CD8-positive, alpha-beta T cell (primary cell): ENCODE measurements at regions of chr2 and their contacts with region 1.

Region 1: DNA sequence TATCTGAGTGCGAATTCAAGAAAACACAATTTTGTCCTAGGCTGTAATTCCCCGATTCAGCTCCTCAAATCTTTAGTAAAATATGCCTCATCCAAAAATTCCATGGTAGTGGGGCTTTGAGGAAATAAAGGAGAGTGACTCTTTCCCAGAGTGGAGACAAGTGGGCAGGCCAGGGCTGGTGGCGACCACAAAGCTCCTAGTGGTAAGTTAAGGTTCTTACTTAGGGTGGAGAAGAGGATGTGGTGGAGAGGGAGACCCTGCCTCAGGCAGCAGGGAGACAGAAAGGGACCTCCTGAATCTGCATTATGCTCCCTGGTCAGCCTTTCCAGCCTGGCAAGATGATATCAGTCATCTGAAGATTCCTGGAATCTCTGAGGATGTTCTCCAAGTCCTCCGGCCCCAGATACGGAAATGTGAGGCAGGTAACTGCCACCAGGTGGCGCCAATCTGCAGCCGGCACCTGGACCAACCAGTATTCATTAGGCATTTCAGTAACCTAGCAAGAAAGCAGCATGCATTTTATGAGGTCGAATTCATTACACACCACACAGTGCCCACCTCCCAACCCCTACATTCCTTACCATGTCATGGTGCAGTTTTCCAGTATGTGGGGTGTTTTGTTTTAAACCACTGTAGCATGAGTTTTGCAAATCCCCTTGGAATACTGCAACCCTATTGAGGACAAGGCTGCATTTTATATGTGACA is 106.4 kb downstream of the POLE4 start:
- DNase-seq: peak; percentile 18 to 63 (median 43)
- ATAC-seq: no peak
- H3K4me3 ChIP-seq: no peak overlapping the region
- H3K4me3 Mint-ChIP-seq: no peak overlapping the region
- H3K27ac ChIP-seq: no peak overlapping the region
- H3K27ac Mint-ChIP-seq: no peak overlapping the region
- H3K4me1 ChIP-seq: no peaks in the 10 kb centered on the region
- H3K4me1 Mint-ChIP-seq: no peaks in the 10 kb centered on the region
- H3K27me3 ChIP-seq: no peaks in the 10 kb centered on the region
- H3K27me3 Mint-ChIP-seq: peaks cover 2% of the 10 kb centered on the region
- CTCF ChIP-seq: peak; percentile 67

Region 2: DNA sequence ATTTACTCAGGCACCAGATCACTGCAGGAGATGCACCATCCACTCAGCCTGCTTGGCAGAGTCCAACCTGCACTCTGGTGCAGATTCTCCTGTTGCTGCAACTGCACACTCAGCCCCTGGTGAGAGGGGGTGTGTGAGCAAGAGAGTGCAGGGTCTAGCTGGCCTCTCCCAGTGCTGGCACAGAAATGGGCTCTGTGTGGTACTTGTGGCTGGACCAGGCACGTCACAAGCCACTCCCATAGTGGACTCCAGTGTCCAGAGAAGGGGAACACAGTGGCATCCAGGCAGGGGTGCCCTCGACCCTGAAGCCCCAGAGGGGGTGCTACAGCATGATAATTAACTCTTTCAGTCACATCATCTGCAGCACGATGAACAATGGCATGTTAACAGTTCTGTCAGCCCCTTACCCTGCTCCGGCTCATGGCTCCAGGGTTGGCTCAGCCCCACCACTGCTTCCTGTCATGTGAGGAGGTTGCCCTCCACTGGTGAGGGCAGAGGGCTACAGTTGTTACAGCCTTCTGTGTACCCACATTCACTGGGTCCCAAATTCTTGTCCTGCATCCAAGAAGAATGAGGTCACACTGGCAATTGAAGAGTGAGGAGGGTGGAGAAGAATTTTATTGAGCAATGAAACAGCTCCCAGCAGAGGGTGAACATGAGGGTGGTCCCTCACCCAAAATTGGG is 360.2 kb after region 1 on chr2:
- CTCF ChIA-PET with region 1: no interaction called
- POLR2A ChIA-PET with region 1: no interaction called
- intact Hi-C with region 1: loop called in 1 of 2 experiments (anchors 2 kb)
- DNase-seq: peak in 3 of 9 experiments; percentile 10 to 26 (median 21)
- ATAC-seq: no peak
- H3K4me3 ChIP-seq: no peak overlapping the region
- H3K4me3 Mint-ChIP-seq: no peak overlapping the region
- H3K27ac ChIP-seq: no peak overlapping the region
- H3K27ac Mint-ChIP-seq: no peak overlapping the region
- H3K4me1 ChIP-seq: no peaks in the 10 kb centered on the region
- H3K4me1 Mint-ChIP-seq: no peaks in the 10 kb centered on the region
- H3K27me3 ChIP-seq: no peaks in the 10 kb centered on the region
- H3K27me3 Mint-ChIP-seq: peaks cover 22% of the 10 kb centered on the region
- CTCF ChIP-seq: no peak

Region 3: GRCh38 chr2:75466708-75467311 is 402.0 kb after region 1 on chr2:
- CTCF ChIA-PET with region 1: interaction called, 5 read pairs
- POLR2A ChIA-PET with region 1: no interaction called
- intact Hi-C with region 1: loop called (anchors 2 to 5 kb)
- DNase-seq: peak in 3 of 9 experiments; percentile 6 to 32 (median 13)
- ATAC-seq: no peak
- H3K4me3 ChIP-seq: no peak overlapping the region
- H3K4me3 Mint-ChIP-seq: no peak overlapping the region
- H3K27ac ChIP-seq: no peak overlapping the region
- H3K27ac Mint-ChIP-seq: no peak overlapping the region
- H3K4me1 ChIP-seq: no peaks in the 10 kb centered on the region
- H3K4me1 Mint-ChIP-seq: no peaks in the 10 kb centered on the region
- H3K27me3 ChIP-seq: no peaks in the 10 kb centered on the region
- H3K27me3 Mint-ChIP-seq: peaks cover 11% of the 10 kb centered on the region
- CTCF ChIP-seq: peak; percentile 44